Ovary (tissue), 10 donors: ENCODE measurements at regions of chr11 and their contacts with region 1.

Region 1: DNA sequence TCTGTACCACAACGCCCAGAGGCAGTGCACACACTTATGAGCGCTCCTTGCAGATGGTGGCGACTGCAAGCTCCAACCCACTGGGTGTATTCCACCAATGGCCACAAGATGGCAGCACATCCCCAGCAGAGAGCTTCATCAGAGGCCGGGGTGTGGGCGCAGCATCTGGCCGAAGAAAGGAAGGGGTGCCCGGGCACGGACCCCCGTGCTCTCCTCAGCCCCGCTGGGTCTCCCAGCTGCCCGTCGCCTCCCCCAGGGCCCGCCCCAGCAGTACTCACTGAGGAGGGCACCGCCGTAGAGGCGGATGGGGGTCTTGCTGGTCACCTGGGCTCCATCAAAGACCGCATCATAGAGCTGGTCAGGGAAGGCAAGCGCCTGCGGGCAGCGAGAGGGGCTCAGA is 14.2 kb downstream of the TP53I11 start:
- DNase-seq: peak; percentile 66 to 87 (median 84)
- H3K4me3 ChIP-seq: no peak overlapping the region
- H3K27ac ChIP-seq: no peak overlapping the region
- H3K4me1 ChIP-seq: peaks cover 2% of the 10 kb centered on the region
- H3K27me3 ChIP-seq: no peaks in the 10 kb centered on the region
- CTCF ChIP-seq: peak; percentile 86 to 91 (median 87)
- EP300 ChIP-seq: no peak
- POLR2A ChIP-seq: no peak

Region 2: DNA sequence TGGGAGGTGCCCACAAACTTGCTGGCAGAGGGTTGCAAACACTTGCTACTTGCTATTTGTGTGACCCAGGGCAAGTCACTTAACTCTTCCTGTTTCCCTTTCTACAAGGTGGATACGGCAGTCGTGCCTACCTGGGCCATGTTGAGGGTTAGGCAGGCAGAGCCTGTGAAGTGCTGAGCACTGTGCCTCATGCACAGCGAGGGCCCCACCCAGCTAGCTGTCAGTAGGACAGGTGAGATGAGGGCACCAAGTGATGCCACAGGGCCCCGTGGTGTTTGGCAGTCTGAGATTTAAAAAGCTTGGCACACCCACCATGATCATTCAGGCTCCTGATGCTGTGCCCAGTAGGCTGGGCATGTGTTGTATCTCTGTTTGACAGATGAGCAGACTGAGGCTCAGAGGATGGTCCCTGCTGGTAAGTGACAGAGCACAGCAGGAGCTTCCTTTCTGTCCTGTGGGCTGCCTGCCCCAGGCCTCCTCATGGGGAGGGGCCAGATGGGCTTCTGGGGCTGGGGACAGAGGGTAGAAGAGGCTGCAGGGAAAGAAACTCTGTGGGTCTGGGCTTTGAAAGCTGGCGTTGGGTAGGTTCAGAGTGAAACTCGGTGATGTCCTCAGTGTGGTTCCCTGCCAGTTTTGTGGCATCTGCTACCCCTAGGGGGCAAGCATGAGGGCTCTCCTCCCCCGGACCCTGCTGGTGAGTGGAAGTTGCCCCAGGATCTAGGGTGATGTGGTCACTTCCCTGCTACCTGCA is 150.5 kb before region 1 on chr11:
- intact Hi-C with region 1: no loop called
- DNase-seq: no peak
- H3K4me3 ChIP-seq: no peak overlapping the region
- H3K27ac ChIP-seq: no peak overlapping the region
- H3K4me1 ChIP-seq: peaks cover 1% of the 10 kb centered on the region
- H3K27me3 ChIP-seq: no peaks in the 10 kb centered on the region
- CTCF ChIP-seq: no peak
- EP300 ChIP-seq: no peak
- POLR2A ChIP-seq: no peak

Region 3: DNA sequence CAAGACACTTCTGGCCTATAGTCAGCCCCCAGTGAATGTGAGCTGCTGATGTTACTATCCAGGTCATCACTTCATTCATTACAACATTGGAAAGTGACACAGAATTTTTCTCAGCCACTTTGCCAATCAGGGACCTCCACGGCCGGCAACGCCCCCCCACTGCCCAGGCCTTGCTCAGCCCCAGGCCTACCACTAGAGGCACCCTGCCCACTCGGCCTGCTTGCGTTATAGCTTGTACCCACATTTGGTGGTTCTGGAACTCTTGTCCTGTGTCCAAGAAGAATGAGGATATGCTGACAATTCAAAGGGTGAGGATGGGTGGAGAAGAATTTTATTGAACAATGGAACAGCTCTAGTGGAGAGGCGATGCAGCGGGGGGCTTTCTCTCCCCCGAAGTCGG is 113.5 kb before region 1 on chr11:
- intact Hi-C with region 1: no loop called
- DNase-seq: no peak
- H3K4me3 ChIP-seq: no peak overlapping the region
- H3K27ac ChIP-seq: no peak overlapping the region
- H3K4me1 ChIP-seq: no peaks in the 10 kb centered on the region
- H3K27me3 ChIP-seq: no peaks in the 10 kb centered on the region
- CTCF ChIP-seq: no peak
- EP300 ChIP-seq: no peak
- POLR2A ChIP-seq: no peak

Region 4: GRCh38 chr11:44833877-44834452 is 102.6 kb before region 1 on chr11:
- intact Hi-C with region 1: no loop called
- DNase-seq: no peak
- H3K4me3 ChIP-seq: no peak overlapping the region
- H3K27ac ChIP-seq: no peak overlapping the region
- H3K4me1 ChIP-seq: no peaks in the 10 kb centered on the region
- H3K27me3 ChIP-seq: no peaks in the 10 kb centered on the region
- CTCF ChIP-seq: no peak
- EP300 ChIP-seq: no peak
- POLR2A ChIP-seq: no peak

Region 5: GRCh38 chr11:45097721-45098493 is 161.4 kb after region 1 on chr11:
- intact Hi-C with region 1: loop called in 2 of 4 experiments (anchors 2 kb)
- DNase-seq: peak; percentile 34 to 70 (median 56)
- H3K4me3 ChIP-seq: no peak overlapping the region
- H3K27ac ChIP-seq: no peak overlapping the region
- H3K4me1 ChIP-seq: peaks cover 3% of the 10 kb centered on the region
- H3K27me3 ChIP-seq: no peaks in the 10 kb centered on the region
- CTCF ChIP-seq: no peak
- EP300 ChIP-seq: no peak
- POLR2A ChIP-seq: no peak

Region 6: GRCh38 chr11:45102810-45103621 is 166.5 kb after region 1 on chr11:
- intact Hi-C with region 1: loop called in 3 of 4 experiments (anchors 2 kb)
- DNase-seq: peak in 3 of 5 donors; percentile 40 to 46 (median 43)
- H3K4me3 ChIP-seq: no peak overlapping the region
- H3K27ac ChIP-seq: no peak overlapping the region
- H3K4me1 ChIP-seq: no peaks in the 10 kb centered on the region
- H3K27me3 ChIP-seq: no peaks in the 10 kb centered on the region
- CTCF ChIP-seq: peak; percentile 58 to 83 (median 79)
- EP300 ChIP-seq: no peak
- POLR2A ChIP-seq: no peak

Region 7: GRCh38 chr11:45252134-45252855 is 315.8 kb after region 1 on chr11:
- intact Hi-C with region 1: loop called in 1 of 4 experiments (anchors 10 kb)
- DNase-seq: peak in 2 of 5 donors; percentile 20 to 40
- H3K4me3 ChIP-seq: no peak overlapping the region
- H3K27ac ChIP-seq: no peak overlapping the region
- H3K4me1 ChIP-seq: no peaks in the 10 kb centered on the region
- H3K27me3 ChIP-seq: no peaks in the 10 kb centered on the region
- CTCF ChIP-seq: no peak
- EP300 ChIP-seq: no peak
- POLR2A ChIP-seq: no peak

Region 8: DNA sequence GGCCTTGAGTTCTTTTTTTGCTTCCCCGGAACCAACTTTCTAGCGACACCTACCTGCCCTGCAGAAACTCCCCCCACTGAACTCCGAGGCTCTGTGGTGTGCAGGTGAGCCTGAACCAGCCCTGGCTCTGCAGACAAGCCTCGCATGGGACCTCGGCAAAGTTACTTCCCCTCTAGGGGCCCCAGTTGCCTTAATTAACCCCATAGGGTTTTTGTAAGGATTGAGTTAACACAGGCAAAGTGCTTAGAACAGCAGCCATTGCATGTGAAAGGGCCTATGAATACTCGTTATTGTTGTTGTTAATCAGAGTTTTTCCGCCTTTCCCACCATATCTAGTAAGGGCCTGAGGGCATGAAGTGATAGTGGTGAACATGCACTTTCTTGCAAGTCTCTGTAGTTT is 362.2 kb after region 1 on chr11:
- intact Hi-C with region 1: loop called in 3 of 4 experiments (anchors 10 kb)
- DNase-seq: no peak
- H3K4me3 ChIP-seq: no peak overlapping the region
- H3K27ac ChIP-seq: no peak overlapping the region
- H3K4me1 ChIP-seq: no peaks in the 10 kb centered on the region
- H3K27me3 ChIP-seq: no peaks in the 10 kb centered on the region
- CTCF ChIP-seq: no peak
- EP300 ChIP-seq: no peak
- POLR2A ChIP-seq: no peak

Region 9: DNA sequence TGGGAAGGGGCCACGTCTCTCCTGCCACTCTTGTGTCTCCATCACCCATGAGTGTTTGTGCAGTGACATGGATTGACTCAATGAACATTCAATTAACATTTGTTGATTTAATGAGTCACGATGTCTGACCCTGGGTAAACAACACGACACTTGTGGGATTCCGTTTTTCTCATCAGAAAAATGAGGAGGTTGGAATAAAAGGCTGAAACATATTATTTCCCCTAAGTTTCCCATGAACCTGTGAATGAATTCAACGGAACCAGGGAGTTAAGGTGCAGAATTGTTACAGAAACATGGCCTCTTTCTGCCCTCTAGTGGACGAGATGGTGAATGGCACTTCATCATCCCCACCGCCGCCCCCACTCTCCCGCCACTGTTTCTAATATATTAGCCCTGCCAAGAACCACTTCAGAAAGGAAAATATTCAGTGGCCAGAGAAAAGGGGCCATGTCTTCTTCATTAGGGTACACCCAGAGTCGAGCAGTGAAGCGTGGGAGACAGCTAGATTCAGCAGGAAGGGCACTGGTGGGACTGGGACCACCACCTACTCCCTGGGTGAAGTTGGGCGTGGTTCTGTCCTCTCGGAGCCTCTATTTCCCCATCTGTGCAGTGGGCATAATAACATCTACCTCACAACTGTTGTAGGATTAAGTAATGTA is 395.9 kb after region 1 on chr11:
- intact Hi-C with region 1: loop called in 2 of 4 experiments (anchors 5 to 10 kb)
- DNase-seq: peak; percentile 30 to 67 (median 56)
- H3K4me3 ChIP-seq: peak overlapping the region; percentile 2
- H3K27ac ChIP-seq: peak overlapping the region in 1 of 2 donors; percentile 31
- H3K4me1 ChIP-seq: peaks cover 4% of the 10 kb centered on the region
- H3K27me3 ChIP-seq: no peaks in the 10 kb centered on the region
- CTCF ChIP-seq: peak; percentile 12 to 72 (median 49)
- EP300 ChIP-seq: no peak
- POLR2A ChIP-seq: no peak

Region 10: GRCh38 chr11:45339729-45340519 is 403.4 kb after region 1 on chr11:
- intact Hi-C with region 1: loop called in 1 of 4 experiments (anchors 10 kb)
- DNase-seq: peak; percentile 93 to 96 (median 96)
- H3K4me3 ChIP-seq: no peak overlapping the region
- H3K27ac ChIP-seq: no peak overlapping the region
- H3K4me1 ChIP-seq: peaks cover 2% of the 10 kb centered on the region
- H3K27me3 ChIP-seq: no peaks in the 10 kb centered on the region
- CTCF ChIP-seq: peak; percentile 81 to 88 (median 87)
- EP300 ChIP-seq: no peak
- POLR2A ChIP-seq: no peak